Tibial artery (tissue), 4 donors: ENCODE measurements at regions of chr2 and their contacts with region 1.

Region 1: DNA sequence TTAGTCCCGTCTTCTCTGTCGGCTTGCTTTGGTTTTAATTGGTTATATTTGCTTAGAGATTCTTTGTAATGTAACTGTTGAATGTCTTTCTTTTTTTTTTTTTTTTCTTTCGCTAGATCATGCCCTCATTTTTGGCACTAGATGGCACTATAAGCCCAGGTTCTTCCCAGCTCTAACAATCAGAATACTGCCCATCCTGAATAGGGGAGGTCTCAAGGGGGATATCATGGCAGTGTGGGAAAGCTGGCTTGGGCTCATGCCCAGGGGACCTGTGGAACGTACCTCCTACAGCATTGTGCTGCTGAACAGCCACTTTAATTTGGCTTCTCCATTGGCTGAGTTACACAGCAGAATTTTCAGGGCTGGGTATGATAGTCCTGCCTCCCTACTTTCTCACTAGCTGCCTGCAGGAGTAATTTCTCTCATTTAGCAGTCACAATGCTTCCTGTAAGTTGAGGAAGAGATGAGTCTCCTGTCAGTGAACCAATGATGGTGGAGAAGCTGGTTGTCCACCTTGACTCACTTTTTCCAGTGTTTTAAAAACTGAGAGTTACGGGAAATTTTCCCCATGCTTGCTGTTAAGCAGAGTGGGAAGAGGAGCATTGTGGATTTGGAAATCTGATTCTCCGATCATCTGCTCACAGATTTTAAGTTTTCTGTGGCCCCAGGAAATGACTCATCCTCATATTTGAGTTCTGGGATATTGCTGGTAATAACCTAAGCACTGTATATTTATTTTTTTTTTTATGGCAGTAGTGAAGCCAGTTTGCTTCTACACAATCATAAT is 47.2 kb downstream of the RAD51AP2 start:
- DNase-seq: no peak
- H3K4me3 ChIP-seq: no peak overlapping the region
- H3K27ac ChIP-seq: no peak overlapping the region
- H3K4me1 ChIP-seq: no peaks in the 10 kb centered on the region
- H3K27me3 ChIP-seq: no peaks in the 10 kb centered on the region
- CTCF ChIP-seq: no peak

Region 2: DNA sequence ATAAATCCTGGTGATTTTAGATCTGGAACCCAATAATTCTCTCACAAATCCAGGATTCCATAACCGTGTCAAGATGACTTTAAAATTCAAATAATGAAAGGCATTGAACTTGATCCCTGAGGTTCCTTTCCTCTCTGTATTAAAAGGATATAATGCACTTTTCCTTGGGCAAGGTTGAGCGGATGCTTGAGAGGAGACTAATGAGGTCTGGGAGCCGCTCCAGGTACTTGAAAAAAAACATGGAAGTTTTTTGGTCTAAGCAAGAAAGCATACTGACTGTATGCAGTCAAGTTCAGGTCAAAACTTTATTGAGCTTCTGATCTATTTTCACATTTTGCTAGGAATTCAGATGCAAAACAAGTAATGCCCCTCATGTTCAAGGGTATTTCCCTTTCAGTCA is 271.3 kb before region 1 on chr2:
- intact Hi-C with region 1: no loop called
- DNase-seq: no peak
- H3K4me3 ChIP-seq: no peak overlapping the region
- H3K27ac ChIP-seq: no peak overlapping the region
- H3K4me1 ChIP-seq: no peaks in the 10 kb centered on the region
- H3K27me3 ChIP-seq: peaks cover 0 to 3% of the 10 kb centered on the region in 2 donors
- CTCF ChIP-seq: no peak

Region 3: GRCh38 chr2:17355608-17356329 is 115.3 kb before region 1 on chr2:
- intact Hi-C with region 1: no loop called
- DNase-seq: no peak
- H3K4me3 ChIP-seq: no peak overlapping the region
- H3K27ac ChIP-seq: no peak overlapping the region
- H3K4me1 ChIP-seq: no peaks in the 10 kb centered on the region
- H3K27me3 ChIP-seq: no peaks in the 10 kb centered on the region
- CTCF ChIP-seq: no peak

Region 4: GRCh38 chr2:17573085-17573803 is 102.2 kb after region 1 on chr2:
- intact Hi-C with region 1: loop called (anchors 10 kb)
- DNase-seq: no peak
- H3K4me3 ChIP-seq: no peak overlapping the region
- H3K27ac ChIP-seq: no peak overlapping the region
- H3K4me1 ChIP-seq: no peaks in the 10 kb centered on the region
- H3K27me3 ChIP-seq: no peaks in the 10 kb centered on the region
- CTCF ChIP-seq: peak in 1 of 2 experiments; percentile 29